ENCODE measurements at regions of chr2 and their contacts with region 1.

Region 1: GRCh38 chr2:147250652-147251356 is 594.0 kb upstream of the ACVR2A start:
- DNase-seq: no peak
- H3K4me3 ChIP-seq: no peak overlapping the region
- H3K27ac ChIP-seq: no peak overlapping the region
- H3K4me1 ChIP-seq: no peaks in the 10 kb centered on the region
- H3K27me3 ChIP-seq: no peaks in the 10 kb centered on the region
- CTCF ChIP-seq: no peak

Region 2: GRCh38 chr2:147045113-147045512 is 205.7 kb before region 1 on chr2:
- CTCF ChIA-PET with region 1: interaction called, 12 read pairs
- POLR2A ChIA-PET with region 1: no interaction called
- intact Hi-C with region 1: no loop called
- DNase-seq: peak in 1 of 2 experiments; percentile 25
- H3K4me3 ChIP-seq: no peak overlapping the region
- H3K27ac ChIP-seq: no peak overlapping the region
- H3K4me1 ChIP-seq: no peaks in the 10 kb centered on the region
- H3K27me3 ChIP-seq: no peaks in the 10 kb centered on the region
- CTCF ChIP-seq: peak; percentile 69

Region 3: DNA sequence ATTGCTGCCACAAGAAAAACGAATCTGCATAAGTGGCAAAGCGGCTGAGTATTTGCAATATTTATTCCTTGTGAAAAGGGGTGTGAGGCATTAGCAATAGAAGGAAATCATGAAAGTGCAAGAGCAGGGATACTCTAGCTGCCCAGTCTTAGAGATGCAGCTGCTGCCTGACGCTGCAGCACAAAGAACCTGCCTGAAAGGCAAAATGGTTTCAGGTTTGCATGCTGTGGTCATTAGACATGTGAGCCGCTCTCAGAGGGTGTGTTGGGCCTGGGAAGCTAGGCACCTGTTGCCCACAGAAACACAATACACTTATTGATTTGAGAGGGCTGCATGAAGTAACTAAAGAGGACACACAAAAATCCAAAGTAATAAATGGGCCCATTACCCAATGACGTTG is 101.5 kb after region 1 on chr2:
- CTCF ChIA-PET with region 1: no interaction called
- POLR2A ChIA-PET with region 1: no interaction called
- intact Hi-C with region 1: no loop called
- DNase-seq: no peak
- H3K4me3 ChIP-seq: no peak overlapping the region
- H3K27ac ChIP-seq: no peak overlapping the region
- H3K4me1 ChIP-seq: no peaks in the 10 kb centered on the region
- H3K27me3 ChIP-seq: no peaks in the 10 kb centered on the region
- CTCF ChIP-seq: no peak